MCF 10A (cell line): ENCODE measurements at regions of chr2 and their contacts with region 1.

Region 1: DNA sequence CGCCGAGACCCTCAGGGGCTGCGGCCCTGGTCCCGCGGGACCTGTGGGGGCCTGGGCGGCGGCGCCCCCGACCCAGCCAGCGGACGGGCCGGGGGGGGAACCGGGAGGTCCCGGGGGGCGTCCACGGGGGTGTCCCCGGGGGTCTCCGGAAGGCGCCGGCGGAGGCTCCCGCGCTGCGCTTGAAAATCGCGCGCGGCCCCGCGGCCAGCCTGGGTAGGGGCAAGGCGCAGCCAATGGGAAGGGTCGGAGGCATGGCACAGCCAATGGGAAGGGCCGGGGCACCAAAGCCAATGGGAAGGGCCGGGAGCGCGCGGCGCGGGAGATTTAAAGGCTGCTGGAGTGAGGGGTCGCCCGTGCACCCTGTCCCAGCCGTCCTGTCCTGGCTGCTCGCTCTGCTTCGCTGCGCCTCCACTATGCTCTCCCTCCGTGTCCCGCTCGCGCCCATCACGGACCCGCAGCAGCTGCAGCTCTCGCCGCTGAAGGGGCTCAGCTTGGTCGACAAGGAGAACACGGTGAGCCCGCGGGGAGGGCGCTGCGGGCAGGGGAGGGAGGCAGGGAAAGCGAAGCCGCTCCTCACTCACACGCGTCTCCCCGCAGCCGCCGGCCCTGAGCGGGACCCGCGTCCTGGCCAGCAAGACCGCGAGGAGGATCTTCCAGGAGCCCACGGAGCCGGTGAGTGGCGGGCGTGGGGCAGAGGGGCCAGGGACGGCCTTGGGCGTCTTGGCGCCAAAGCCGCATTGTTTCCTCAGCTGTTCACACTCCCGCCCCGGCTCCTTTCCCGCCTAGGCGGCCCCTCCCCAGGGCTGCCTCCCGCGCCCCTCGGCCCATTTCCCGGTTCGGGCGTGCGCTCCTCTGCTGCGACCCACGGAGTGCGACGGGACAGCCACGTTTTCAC is at the start of gene RRM2:
- DNase-seq: peak; percentile 96
- H3K4me3 Mint-ChIP-seq: peak within 1 kb of the TSS; percentile 97
- H3K27ac Mint-ChIP-seq: peak within 1 kb of the TSS; percentile 84
- H3K4me1 Mint-ChIP-seq: peaks cover 19% of the 10 kb centered on the region
- H3K27me3 Mint-ChIP-seq: no peaks in the 10 kb centered on the region
- CTCF ChIP-seq: no peak
- total RNA-seq, gene RRM2: 16.5 and 41.8 TPM in 2 replicates

Region 2: DNA sequence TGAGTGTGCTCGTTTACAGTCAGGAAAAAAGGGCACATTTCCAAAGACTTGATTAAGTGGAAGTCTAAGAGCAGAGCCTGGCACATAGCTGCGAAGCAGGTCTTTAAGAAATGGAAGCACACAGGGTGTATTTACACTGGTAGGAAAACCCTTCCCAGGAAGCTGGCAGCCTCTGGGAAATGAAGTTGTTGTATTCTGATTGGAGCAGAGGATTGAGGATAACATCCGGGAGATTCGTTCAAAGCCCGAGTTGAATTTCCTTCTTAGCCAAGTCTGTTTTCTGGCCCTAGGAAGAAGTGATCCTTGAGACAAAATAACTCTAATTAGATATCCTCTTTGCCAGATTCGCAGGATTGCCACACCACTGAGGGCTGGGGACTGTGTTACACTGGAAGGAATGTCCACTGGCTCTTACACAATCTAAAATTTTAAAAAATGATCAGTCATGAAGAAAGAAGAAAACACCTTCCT is 775.2 kb before region 1 on chr2:
- CTCF ChIA-PET with region 1: no interaction called
- POLR2A ChIA-PET with region 1: no interaction called
- intact Hi-C with region 1: no loop called
- DNase-seq: no peak
- H3K4me3 Mint-ChIP-seq: no peak overlapping the region
- H3K27ac Mint-ChIP-seq: peak overlapping the region; percentile 66
- H3K4me1 Mint-ChIP-seq: no peaks in the 10 kb centered on the region
- H3K27me3 Mint-ChIP-seq: no peaks in the 10 kb centered on the region
- CTCF ChIP-seq: no peak

Region 3: GRCh38 chr2:10083692-10084181 is 38.9 kb before region 1 on chr2:
- CTCF ChIA-PET with region 1: no interaction called
- POLR2A ChIA-PET with region 1: no interaction called
- intact Hi-C with region 1: no loop called
- DNase-seq: no peak
- H3K4me3 Mint-ChIP-seq: no peak overlapping the region
- H3K27ac Mint-ChIP-seq: no peak overlapping the region
- H3K4me1 Mint-ChIP-seq: no peaks in the 10 kb centered on the region
- H3K27me3 Mint-ChIP-seq: peaks cover 54% of the 10 kb centered on the region
- CTCF ChIP-seq: no peak

Region 4: GRCh38 chr2:10097352-10098148 is 25.1 kb before region 1 on chr2:
- CTCF ChIA-PET with region 1: interaction called, 10 read pairs
- POLR2A ChIA-PET with region 1: interaction called, 7 read pairs
- intact Hi-C with region 1: no loop called
- DNase-seq: peak; percentile 73
- H3K4me3 Mint-ChIP-seq: no peak overlapping the region
- H3K27ac Mint-ChIP-seq: peak overlapping the region; percentile 31
- H3K4me1 Mint-ChIP-seq: peaks cover 18% of the 10 kb centered on the region
- H3K27me3 Mint-ChIP-seq: no peaks in the 10 kb centered on the region
- CTCF ChIP-seq: peak; percentile 80

Region 5: GRCh38 chr2:10141736-10142642 is 19.4 kb after region 1 on chr2:
- CTCF ChIA-PET with region 1: interaction called, 30 read pairs
- POLR2A ChIA-PET with region 1: interaction called, 3 read pairs
- intact Hi-C with region 1: no loop called
- DNase-seq: peak; percentile 28
- H3K4me3 Mint-ChIP-seq: no peak overlapping the region
- H3K27ac Mint-ChIP-seq: no peak overlapping the region
- H3K4me1 Mint-ChIP-seq: peaks cover 5% of the 10 kb centered on the region
- H3K27me3 Mint-ChIP-seq: no peaks in the 10 kb centered on the region
- CTCF ChIP-seq: peak; percentile 52

Region 6: GRCh38 chr2:10302479-10303180 is 180.0 kb after region 1 on chr2 and contains the start of gene HPCAL1:
- CTCF ChIA-PET with region 1: interaction called, 18 read pairs
- POLR2A ChIA-PET with region 1: interaction called, 24 read pairs
- intact Hi-C with region 1: loop called (anchors 1 kb)
- DNase-seq: peak; percentile 87
- H3K4me3 Mint-ChIP-seq: peak within 1 kb of the TSS; percentile 98
- H3K27ac Mint-ChIP-seq: peak within 1 kb of the TSS; percentile 90
- H3K4me1 Mint-ChIP-seq: peaks cover 26% of the 10 kb centered on the region
- H3K27me3 Mint-ChIP-seq: no peaks in the 10 kb centered on the region
- CTCF ChIP-seq: peak; percentile 81
- total RNA-seq, gene HPCAL1: 136 and 144 TPM in 2 replicates